HEK293 (cell line): ENCODE measurements at regions of chr17 and their contacts with region 1.

Region 1: DNA sequence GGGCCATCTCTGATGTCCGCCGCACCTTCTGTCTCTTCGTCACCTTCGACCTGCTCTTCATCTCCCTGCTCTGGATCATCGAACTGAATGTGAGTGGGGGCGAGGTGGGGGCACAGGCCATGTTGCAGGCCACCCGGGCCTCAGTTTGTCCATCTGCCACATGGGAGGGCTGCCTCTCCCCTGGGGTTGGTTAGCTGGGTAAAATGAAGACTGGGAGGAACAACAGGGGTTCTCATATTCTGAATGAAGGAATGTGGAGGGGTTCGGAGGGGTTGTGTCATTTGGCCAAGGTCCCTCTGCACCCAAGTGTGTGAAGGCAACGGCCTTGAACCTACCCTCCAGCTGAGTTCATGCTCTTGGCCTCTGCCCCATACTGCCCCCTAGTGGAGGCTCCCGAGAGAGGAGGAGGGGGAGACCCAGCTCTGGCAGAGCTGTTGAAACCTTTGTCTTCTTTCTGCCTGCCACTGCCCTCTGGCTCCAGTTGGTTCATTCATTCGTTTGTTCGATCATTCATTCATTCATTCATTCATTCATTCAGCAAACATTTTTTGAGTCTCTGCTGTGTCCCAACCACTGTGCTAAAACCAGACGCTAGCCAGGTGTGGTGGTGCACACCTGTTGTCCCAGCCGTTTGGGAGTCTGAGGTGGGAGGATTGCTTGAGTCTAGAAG is 11.4 kb upstream of the TCAP start:
- H3K4me3 ChIP-seq: no peak overlapping the region
- H3K27ac ChIP-seq: no peak overlapping the region
- H3K4me1 ChIP-seq: peaks cover 2% of the 10 kb centered on the region; the same call in 1 of the 2 replicates
- CTCF ChIP-seq: peak; percentile 64

Region 2: DNA sequence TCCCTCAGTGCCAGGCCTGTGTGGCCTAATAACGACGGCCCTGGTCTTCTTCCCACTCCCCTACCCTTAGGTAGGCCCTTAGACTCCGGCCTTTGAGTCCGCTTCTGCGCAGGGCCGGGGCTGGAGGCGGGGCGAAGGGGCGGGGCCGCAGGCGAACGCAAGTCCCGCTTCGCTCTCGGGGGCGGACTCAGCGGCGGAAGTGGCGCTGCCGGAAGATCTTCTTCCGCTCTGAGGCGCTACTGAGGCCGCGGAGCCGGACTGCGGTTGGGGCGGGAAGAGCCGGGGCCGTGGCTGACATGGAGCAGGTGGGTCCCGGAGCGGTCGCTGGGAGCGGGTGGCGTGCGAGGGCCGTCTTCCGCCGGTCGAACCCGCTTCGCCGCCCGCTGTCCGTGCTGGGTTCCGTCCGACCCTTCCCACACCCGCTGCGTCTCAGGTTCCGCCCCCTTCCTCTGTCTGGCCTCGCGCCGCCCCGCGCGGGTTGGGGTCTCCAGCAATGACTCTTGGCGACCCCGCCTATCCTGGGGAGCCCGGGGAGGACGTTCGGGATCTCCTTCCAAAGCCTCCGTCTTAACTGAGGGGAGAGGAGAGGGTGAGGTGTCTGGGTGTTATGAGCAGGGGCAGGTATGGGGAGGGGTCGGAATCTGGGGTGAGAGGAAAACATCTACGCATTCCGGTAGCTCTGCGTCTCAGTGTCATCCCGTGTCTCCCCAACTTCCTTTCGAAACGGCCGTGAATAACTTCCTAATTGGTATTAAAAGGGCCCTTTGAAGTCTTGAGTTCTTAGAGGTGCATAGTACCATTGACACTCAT is 16.7 kb before region 1 on chr17 and contains the start of gene STARD3:
- CTCF ChIA-PET with region 1: interaction called, 126 read pairs
- POLR2A ChIA-PET with region 1: interaction called, 5 read pairs
- H3K4me3 ChIP-seq: peak within 1 kb of the TSS; percentile 88
- H3K27ac ChIP-seq: peak within 1 kb of the TSS; percentile 76
- H3K4me1 ChIP-seq: peaks cover 25% of the 10 kb centered on the region
- CTCF ChIP-seq: peak; percentile 90

Region 3: DNA sequence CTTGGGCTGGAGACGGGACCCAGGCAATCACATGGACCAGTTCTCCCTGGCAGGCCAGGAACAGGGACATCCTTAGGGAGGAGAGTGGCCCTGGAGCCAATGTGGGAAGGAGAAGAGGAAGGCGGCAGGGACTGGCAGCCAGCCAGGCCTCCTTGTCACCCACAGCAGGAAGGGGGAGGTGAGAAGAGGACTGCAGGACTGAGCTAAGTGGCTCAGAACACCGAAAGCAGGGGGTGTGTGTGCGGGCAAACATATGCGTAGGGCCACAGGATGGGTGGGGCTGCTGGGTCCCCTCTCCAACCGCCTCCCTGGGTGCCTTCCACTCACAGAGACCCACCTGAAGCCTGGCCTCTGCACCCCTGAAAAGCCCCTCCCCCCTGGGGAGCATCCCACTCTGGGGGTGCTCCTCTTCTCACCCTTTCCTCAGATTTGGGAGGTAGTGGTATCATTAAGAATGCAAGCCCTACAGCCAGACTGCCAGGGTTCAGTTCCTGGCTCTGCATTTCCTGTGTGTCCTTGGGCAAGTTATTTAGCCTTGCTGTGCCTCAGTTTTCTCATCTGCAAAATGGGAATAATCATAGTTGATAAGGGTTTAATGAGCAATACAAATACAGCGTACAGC is 22.5 kb after region 1 on chr17:
- CTCF ChIA-PET with region 1: interaction called, 120 read pairs
- POLR2A ChIA-PET with region 1: interaction called, 4 read pairs
- H3K4me3 ChIP-seq: no peak overlapping the region
- H3K27ac ChIP-seq: peak overlapping the region; percentile 48
- H3K4me1 ChIP-seq: peaks cover 17% of the 10 kb centered on the region
- CTCF ChIP-seq: no peak

Region 4: GRCh38 chr17:39699818-39700147 is 46.0 kb after region 1 on chr17 and contains the start of gene ERBB2:
- CTCF ChIA-PET with region 1: interaction called, 17 read pairs
- POLR2A ChIA-PET with region 1: interaction called, 3 read pairs
- H3K4me3 ChIP-seq: peak within 1 kb of the TSS; percentile 81
- H3K27ac ChIP-seq: peak within 1 kb of the TSS; percentile 68; the same call in 1 of the 2 replicates
- H3K4me1 ChIP-seq: peaks cover 13% of the 10 kb centered on the region; the same call in 1 of the 2 replicates
- CTCF ChIP-seq: no peak